Mammary epithelial cell (primary cell): ENCODE measurements at regions of chr5 and their contacts with region 1.

Region 1: DNA sequence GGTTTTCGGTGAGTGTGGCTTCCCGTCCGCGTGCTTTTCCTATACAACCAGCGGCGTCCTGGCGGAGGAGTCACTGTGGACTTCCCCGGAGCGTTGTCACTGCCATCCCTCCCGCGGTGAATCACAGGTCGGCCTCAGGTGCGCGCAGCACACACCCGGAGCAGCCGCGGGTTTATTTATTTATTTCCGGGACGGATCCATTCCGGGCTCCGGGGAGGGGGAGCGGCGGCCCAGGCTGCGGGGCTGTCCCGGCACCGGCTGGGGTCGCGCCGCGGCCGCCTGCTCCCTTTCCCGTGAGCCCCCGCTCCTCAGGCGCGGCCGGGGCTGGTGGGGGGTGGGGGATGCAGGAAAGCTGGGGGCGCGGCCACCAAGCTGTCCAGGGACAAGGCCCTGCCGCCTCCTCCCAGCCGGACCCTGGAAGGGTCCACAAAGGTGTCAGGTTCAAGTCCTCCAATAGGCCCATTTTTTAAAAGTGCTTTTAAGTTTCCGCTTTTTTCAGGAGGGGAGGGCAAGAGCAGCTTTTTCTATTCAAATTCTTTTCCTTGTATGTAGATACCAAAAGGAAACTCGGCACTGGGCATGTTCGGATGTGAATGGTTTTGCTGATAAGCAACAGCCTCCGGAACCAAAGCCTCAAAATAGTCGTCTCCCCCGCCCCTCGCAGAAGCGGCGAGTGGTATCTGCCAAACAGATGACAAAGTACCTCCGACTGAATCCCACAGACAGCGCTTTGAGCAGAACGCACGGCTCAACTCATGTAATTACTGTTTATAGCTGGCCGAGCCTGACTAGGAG is 192.5 kb downstream of the CD180 start:
- DNase-seq: peak; percentile 97
- H3K4me3 ChIP-seq: peak overlapping the region; percentile 75 to 93 (median 85)
- H3K27ac ChIP-seq: peak overlapping the region; percentile 98
- H3K4me1 ChIP-seq: peaks cover 24% of the 10 kb centered on the region
- H3K27me3 ChIP-seq: no peaks in the 10 kb centered on the region
- CTCF ChIP-seq: no peak

Region 2: DNA sequence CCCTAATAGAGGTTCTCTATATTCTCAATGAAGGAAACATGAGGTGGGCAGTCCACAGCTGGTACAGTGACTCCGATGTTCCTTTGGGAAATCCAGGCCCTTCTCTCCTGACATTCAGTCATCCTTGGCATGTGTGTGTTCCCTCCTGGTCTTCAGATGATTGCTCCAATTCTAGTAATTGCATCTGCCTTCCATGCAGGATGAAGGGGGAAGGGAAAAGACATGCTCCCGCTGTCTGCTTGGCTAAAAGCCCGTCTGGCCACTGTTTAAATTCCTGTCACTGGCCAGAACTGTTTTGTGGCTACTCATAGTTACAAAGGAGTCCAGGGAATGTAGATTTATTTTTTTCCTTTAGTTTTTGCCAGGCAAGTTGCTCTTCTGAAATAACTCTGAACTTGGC is 343.0 kb before region 1 on chr5:
- CTCF ChIA-PET with region 1: no interaction called
- dilution Hi-C with region 1: no loop called
- in situ Hi-C with region 1: no loop called
- intact Hi-C with region 1: no loop called
- DNase-seq: no peak
- H3K4me3 ChIP-seq: no peak overlapping the region
- H3K27ac ChIP-seq: no peak overlapping the region
- H3K4me1 ChIP-seq: no peaks in the 10 kb centered on the region
- H3K27me3 ChIP-seq: no peaks in the 10 kb centered on the region
- CTCF ChIP-seq: no peak

Region 3: DNA sequence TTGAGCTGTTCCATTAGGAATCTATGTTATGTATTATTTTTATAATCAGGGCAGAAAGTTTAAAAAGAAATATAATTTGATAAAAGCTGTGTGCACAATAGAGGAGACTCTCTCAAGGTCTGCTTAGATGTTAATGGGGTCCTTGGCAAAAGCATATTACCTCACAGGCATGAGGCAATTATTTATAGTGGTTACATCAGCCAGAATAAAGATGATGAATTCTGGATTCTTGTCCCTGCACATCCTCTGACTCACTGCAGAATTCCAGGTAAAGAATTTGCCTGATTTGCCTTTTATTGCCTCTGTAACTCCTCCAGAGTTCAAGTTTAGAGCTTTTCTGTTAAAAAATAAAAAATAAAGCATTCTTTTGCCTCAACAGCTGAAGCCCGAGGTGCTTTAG is 154.3 kb before region 1 on chr5:
- CTCF ChIA-PET with region 1: no interaction called
- dilution Hi-C with region 1: no loop called
- in situ Hi-C with region 1: no loop called
- intact Hi-C with region 1: loop called (anchors 2 kb)
- DNase-seq: peak; percentile 84
- H3K4me3 ChIP-seq: peak overlapping the region; percentile 3 to 40 (median 29)
- H3K27ac ChIP-seq: peak overlapping the region; percentile 100
- H3K4me1 ChIP-seq: peaks cover 33% of the 10 kb centered on the region
- H3K27me3 ChIP-seq: no peaks in the 10 kb centered on the region
- CTCF ChIP-seq: no peak

Region 4: DNA sequence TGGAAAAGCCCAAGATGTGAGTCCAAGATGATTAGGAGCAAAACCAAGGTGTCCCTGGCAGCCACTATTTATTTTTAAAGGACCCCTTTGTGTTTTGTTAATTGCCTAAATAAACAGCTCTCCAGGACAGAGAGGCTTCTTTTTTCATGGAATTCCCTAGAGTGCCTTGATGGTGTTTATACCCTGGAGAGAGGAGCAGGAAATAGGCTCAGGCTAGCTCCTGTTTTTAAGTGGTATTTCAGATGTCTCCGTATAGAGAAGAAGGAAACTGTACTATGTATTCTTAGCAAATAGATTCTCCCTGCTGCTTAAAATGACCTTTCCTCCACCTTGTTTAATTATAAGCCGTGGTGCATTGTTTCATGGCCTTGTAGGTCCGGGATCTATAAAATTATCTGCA is 99.9 kb before region 1 on chr5:
- CTCF ChIA-PET with region 1: no interaction called
- dilution Hi-C with region 1: no loop called
- in situ Hi-C with region 1: no loop called
- intact Hi-C with region 1: no loop called
- DNase-seq: no peak
- H3K4me3 ChIP-seq: no peak overlapping the region
- H3K27ac ChIP-seq: no peak overlapping the region
- H3K4me1 ChIP-seq: peaks cover under 1% of the 10 kb centered on the region
- H3K27me3 ChIP-seq: no peaks in the 10 kb centered on the region
- CTCF ChIP-seq: no peak

Region 5: GRCh38 chr5:66933066-66933465 is 71.1 kb before region 1 on chr5:
- CTCF ChIA-PET with region 1: no interaction called
- dilution Hi-C with region 1: no loop called
- in situ Hi-C with region 1: no loop called
- intact Hi-C with region 1: loop called (anchors 5 kb)
- DNase-seq: peak; percentile 81
- H3K4me3 ChIP-seq: no peak overlapping the region
- H3K27ac ChIP-seq: peak overlapping the region; percentile 77
- H3K4me1 ChIP-seq: peaks cover 19% of the 10 kb centered on the region
- H3K27me3 ChIP-seq: no peaks in the 10 kb centered on the region
- CTCF ChIP-seq: no peak

Region 6: GRCh38 chr5:66945389-66946349 is 58.5 kb before region 1 on chr5:
- CTCF ChIA-PET with region 1: no interaction called
- dilution Hi-C with region 1: no loop called
- in situ Hi-C with region 1: no loop called
- intact Hi-C with region 1: no loop called
- DNase-seq: no peak
- H3K4me3 ChIP-seq: no peak overlapping the region
- H3K27ac ChIP-seq: no peak overlapping the region
- H3K4me1 ChIP-seq: no peaks in the 10 kb centered on the region
- H3K27me3 ChIP-seq: no peaks in the 10 kb centered on the region
- CTCF ChIP-seq: no peak

Region 7: DNA sequence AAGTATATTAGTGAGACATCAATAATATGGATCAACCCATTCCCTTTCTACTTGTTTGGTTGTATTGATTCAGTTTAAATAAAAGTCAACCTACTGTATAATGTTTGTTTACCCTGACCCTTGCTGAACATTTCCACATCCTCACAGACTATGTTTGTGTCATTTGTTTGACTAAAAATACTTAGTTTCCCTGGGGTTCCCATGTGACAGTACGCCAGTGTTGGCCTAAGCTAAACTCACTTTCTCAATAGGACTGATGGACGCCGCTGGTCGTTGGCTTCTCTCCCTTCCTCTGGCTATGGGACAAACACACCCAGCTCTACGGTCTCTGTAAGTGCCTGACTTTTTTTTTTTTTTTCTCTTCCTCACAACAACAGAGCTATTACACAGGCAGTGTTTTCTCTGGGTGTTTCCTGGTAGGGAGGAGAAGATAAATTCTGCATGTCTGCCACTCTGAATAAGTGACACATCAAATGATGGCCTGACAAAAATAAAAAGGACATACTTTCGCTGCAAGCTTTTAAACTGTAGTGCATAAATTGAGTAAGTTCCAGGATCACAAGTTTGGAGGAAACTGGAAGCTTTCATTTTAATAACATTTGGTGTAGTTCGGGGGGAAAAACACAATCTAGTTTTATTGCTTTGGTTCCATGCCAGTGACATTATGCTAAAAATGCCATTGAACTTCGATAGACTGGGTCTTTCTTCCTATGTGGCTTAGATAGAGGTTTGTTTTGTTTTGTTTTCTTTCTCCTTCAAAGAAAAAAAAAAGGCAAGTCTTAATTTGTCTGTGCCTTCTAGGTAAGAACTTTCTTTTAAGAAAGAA is 91.4 kb after region 1 on chr5:
- CTCF ChIA-PET with region 1: no interaction called
- dilution Hi-C with region 1: no loop called
- in situ Hi-C with region 1: no loop called
- intact Hi-C with region 1: loop called (anchors 1 kb)
- DNase-seq: peak; percentile 35
- H3K4me3 ChIP-seq: no peak overlapping the region
- H3K27ac ChIP-seq: peak overlapping the region; percentile 80
- H3K4me1 ChIP-seq: peaks cover 32% of the 10 kb centered on the region
- H3K27me3 ChIP-seq: no peaks in the 10 kb centered on the region
- CTCF ChIP-seq: no peak